HepG2 (cell line): ENCODE measurements at regions of chr11 and their contacts with region 1.

Region 1: DNA sequence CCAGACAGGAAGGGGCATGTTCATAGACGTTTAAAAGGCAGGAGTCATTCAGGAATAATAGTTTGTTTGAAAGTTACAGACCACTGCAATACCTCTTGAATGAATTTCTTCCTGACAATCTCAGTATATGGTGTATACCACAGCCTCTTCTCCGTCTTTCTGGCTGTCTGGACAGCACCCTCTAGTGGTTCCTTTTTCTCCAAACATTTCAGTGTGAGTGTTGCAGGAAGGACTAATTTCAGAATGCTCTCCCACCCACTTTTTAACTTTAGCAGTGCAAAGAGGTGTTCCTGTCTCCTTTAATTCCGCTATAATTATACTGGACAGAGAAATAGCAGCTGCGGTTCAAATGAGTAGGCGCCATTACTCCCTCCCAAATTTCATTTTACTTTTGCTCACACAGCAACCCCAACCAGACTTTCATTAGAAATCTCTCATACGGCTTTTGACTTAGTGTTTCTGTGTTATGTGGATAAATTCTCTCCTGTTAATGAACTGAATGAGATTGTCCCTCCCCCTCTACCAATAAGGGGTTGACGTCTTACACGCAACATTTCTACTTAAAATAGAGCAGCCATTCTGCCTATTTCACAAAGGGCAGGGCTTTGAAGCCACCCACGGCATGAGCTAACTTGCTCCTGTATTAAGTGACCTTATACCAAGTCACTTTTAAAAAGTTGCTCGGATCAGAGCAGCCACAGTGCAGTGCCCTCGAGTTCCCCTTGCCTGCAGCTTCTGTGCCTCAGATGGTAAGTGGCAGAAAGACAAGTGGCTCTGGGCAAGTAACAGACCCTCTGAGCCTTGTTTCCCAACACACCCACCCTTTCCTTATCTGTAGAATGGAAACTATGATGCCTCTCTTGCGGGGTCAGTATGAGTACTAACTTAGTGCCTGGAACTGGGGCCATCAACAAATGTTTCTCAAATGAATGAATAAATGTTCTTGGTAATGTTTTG is 368.6 kb downstream of the OPCML start:
- DNase-seq: peak; percentile 51
- ATAC-seq: peak; percentile 92
- H3K4me3 ChIP-seq: no peak overlapping the region
- H3K27ac ChIP-seq: no peak overlapping the region
- H3K4me1 ChIP-seq: peaks cover 6% of the 10 kb centered on the region; the same call in 1 of the 2 replicates
- H3K27me3 ChIP-seq: peaks cover 2 to 25% of the 10 kb centered on the region in 2 experiments; a peak in 4 of 5 replicates
- CTCF ChIP-seq: peak; percentile 64
- EP300 ChIP-seq: no peak
- POLR2A ChIP-seq: no peak
- RAD21 ChIP-seq: no peak

Region 2: GRCh38 chr11:133082851-133083488 is 80.8 kb before region 1 on chr11:
- CTCF ChIA-PET with region 1: interaction called, 6 read pairs
- POLR2A ChIA-PET with region 1: no interaction called
- in situ Hi-C with region 1: no loop called
- intact Hi-C with region 1: loop called (anchors 2 kb)
- DNase-seq: peak; percentile 12
- ATAC-seq: peak; percentile 95
- H3K4me3 ChIP-seq: peak overlapping the region in 2 of 3 experiments; percentile 15 to 43; a peak in 1 of 6 replicates
- H3K27ac ChIP-seq: no peak overlapping the region
- H3K4me1 ChIP-seq: no peaks in the 10 kb centered on the region
- H3K27me3 ChIP-seq: peaks cover 0 to 20% of the 10 kb centered on the region in 2 experiments; a peak in 3 of 5 replicates
- CTCF ChIP-seq: peak; percentile 59; the same call in 1 of the 2 replicates
- EP300 ChIP-seq: no peak
- POLR2A ChIP-seq: no peak
- RAD21 ChIP-seq: peak; percentile 93